GM10248 (cell line): ENCODE measurements at regions of chr15 and their contacts with region 1.

Region 1: GRCh38 chr15:73982222-73982962 is 9.7 kb downstream of the STOML1 start:
- DNase-seq: no peak
- CTCF ChIP-seq: no peak

Region 2: DNA sequence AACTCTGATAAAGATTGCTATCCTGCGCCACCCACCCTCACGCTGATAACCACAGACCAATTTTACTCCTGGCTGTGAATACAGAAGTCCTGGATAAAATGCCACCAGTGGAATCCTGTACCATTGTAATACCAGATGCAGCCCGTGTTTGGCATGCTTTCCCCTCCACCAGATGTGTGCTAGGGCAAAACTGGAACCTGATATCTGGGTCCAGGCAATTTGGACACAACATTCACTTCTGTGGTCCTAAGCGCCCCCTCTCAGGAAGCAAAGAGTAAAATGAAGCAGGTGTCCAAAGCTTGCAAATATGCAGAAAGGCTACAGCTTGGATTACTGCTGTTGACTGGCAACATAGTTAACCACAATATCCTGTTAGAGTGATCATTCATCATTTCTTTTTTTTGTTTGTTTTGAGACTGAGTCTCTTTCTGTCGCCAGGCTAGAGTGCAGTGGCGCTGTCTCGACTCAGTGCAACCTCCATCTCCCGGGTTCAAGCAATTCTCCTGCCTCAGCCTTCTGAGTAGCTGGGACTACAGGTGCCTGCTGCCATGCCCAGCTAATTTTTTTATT is 23.3 kb before region 1 on chr15:
- CTCF ChIA-PET with region 1: interaction called, 6 read pairs
- POLR2A ChIA-PET with region 1: interaction called, 10 read pairs
- DNase-seq: no peak
- CTCF ChIP-seq: no peak

Region 3: DNA sequence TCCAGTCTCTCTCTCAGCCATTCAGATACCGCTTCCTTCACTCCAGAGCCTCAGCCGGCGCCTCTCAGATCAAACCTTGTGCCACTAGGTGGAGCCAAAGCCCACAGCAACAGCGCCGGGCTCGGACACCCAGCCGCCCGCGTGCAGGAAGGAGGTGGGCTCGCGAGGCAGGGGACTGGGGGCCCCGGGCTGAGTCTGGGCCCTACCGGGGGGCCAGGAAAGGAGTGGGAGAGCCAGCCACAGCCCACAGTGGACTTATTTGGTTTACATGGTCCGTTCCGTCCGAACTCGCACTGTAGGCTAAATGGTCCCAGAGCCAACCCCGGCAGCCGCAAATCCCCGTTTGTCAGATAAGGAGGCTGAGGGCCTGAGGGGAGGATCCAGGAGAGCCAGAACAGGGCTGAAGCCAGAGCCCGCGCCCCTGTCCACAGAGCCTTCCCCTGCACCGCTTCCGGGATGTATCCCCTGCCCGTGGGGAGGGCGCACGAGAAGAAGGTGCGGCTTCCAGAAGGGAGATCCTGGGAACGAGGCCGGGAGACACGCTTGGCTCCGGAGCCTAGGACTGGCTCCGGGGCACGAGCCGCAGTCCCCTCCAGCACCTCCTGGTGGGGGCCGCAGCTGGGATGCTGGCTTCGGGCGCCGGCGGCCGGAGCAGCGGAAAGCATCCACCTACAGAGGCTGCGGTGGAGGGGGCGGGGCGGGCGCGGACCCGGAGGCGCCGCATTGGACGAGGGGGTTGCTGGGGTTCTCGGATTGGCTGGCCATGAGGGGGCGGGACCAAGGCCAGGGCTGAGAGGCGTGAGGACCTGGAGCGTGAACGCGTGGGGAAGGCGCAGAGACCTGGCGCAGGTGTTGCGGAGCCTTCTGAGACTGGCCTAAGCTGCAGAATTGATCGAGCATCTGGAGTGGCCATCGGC is 391.6 kb after region 1 on chr15:
- CTCF ChIA-PET with region 1: no interaction called
- POLR2A ChIA-PET with region 1: no interaction called
- DNase-seq: peak; percentile 96
- CTCF ChIP-seq: peak; percentile 96